Naive thymus-derived CD4-positive, alpha-beta T cell (primary cell): ENCODE measurements at regions of chr4 and their contacts with region 1.

Region 1: DNA sequence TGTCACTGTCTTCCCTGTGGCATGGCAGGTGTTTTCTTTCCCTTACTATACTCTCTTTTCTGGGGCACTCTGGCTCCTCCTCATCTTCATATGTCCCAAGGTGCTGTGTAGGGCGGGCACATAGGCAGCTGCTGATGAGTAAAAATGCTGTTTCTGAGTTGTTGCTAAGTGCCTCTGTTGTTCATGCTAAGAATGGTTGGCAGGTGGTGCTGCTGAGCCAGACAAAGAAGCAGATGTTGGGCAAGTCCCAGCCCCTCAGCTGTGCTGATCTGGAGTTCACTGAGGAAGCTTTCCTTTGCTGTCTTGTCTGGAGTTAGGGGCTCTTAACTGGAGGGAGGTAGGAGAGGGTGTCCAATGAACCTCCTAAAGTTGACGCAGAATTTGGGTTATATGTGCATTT is 40.6 kb downstream of the HADH start:
- DNase-seq: peak; percentile 30 to 85 (median 78)
- ATAC-seq: peak; percentile 91
- H3K4me3 ChIP-seq: no peak overlapping the region
- H3K4me3 Mint-ChIP-seq: peak overlapping the region; percentile 70 to 84 (median 76)
- H3K27ac ChIP-seq: peak overlapping the region; percentile 61
- H3K27ac Mint-ChIP-seq: peak overlapping the region; percentile 86 to 96 (median 94)
- H3K4me1 ChIP-seq: peaks cover 9 to 53% of the 10 kb centered on the region in 2 donors
- H3K4me1 Mint-ChIP-seq: peaks cover 28 to 77% (median 66%) of the 10 kb centered on the region in 7 donors
- H3K27me3 ChIP-seq: no peaks in the 10 kb centered on the region
- H3K27me3 Mint-ChIP-seq: no peaks in the 10 kb centered on the region

Region 2: DNA sequence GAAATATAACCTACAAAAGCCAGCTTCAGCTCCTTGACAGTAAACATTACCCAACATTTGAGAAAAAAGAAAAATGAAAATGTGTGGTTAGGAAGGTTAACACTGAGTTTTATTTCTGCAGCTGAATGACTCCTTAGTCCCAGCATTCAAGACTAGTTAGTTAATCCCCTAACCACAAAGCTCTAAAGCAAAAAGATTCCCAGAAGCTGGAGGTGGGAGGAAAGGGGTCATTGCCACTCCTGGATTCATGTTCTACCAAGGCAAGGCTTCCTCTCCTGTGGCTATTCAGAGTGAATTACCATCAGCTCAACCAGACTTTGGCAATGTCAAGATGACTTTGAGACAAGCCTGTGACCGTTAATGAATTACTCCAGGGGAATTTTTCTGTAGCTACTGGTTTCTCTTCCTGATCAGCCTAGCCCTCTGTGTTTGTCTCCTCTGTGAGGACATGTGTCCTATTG is 22.9 kb after region 1 on chr4:
- CTCF ChIA-PET with region 1: interaction called, 21 read pairs
- POLR2A ChIA-PET with region 1: interaction called, 9 read pairs
- intact Hi-C with region 1: loop called (anchors 1 to 2 kb)
- DNase-seq: no peak
- ATAC-seq: no peak
- H3K4me3 ChIP-seq: no peak overlapping the region
- H3K4me3 Mint-ChIP-seq: peak overlapping the region; percentile 36 to 84 (median 54)
- H3K27ac ChIP-seq: peak overlapping the region; percentile 66
- H3K27ac Mint-ChIP-seq: peak overlapping the region; percentile 82 to 99 (median 93)
- H3K4me1 ChIP-seq: peaks cover 15 to 82% of the 10 kb centered on the region in 2 donors
- H3K4me1 Mint-ChIP-seq: peaks cover 56 to 100% (median 94%) of the 10 kb centered on the region in 7 donors
- H3K27me3 ChIP-seq: no peaks in the 10 kb centered on the region
- H3K27me3 Mint-ChIP-seq: no peaks in the 10 kb centered on the region

Region 3: GRCh38 chr4:108109997-108110416 is 79.7 kb after region 1 on chr4:
- CTCF ChIA-PET with region 1: interaction called, 8 read pairs
- POLR2A ChIA-PET with region 1: interaction called, 7 read pairs
- intact Hi-C with region 1: loop called (anchors 1 kb)
- DNase-seq: no peak
- ATAC-seq: no peak
- H3K4me3 ChIP-seq: peak overlapping the region; percentile 7
- H3K4me3 Mint-ChIP-seq: peak overlapping the region; percentile 69 to 89 (median 78)
- H3K27ac ChIP-seq: peak overlapping the region; percentile 80
- H3K27ac Mint-ChIP-seq: peak overlapping the region; percentile 84 to 98 (median 90)
- H3K4me1 ChIP-seq: peaks cover 72 to 98% of the 10 kb centered on the region in 2 donors
- H3K4me1 Mint-ChIP-seq: peaks cover 70 to 97% (median 95%) of the 10 kb centered on the region in 7 donors
- H3K27me3 ChIP-seq: no peaks in the 10 kb centered on the region
- H3K27me3 Mint-ChIP-seq: no peaks in the 10 kb centered on the region

Region 4: DNA sequence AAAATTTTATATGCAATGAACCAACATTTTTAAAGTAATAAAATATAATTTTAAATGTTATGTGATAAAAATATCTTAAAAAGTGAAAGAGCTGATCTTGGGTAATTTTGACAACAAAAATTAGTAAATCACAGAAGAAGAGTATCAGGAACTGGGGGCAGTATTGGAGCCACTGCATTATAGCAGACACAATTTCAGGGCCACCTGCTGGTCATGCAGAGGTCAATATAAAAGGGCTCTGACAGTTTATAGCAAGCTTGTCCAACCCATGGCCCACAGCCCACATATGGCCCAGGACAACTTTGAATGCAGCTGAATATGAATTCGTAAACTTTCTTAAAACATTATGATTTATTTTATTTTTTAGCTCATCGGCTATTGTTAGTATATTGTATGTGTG is 151.4 kb after region 1 on chr4:
- CTCF ChIA-PET with region 1: interaction called, 11 read pairs
- POLR2A ChIA-PET with region 1: interaction called, 4 read pairs
- intact Hi-C with region 1: no loop called
- DNase-seq: no peak
- ATAC-seq: no peak
- H3K4me3 ChIP-seq: no peak overlapping the region
- H3K4me3 Mint-ChIP-seq: no peak overlapping the region
- H3K27ac ChIP-seq: no peak overlapping the region
- H3K27ac Mint-ChIP-seq: no peak overlapping the region
- H3K4me1 ChIP-seq: peaks cover 0 to 13% of the 10 kb centered on the region in 2 donors
- H3K4me1 Mint-ChIP-seq: peaks cover 3 to 56% (median 48%) of the 10 kb centered on the region in 7 donors
- H3K27me3 ChIP-seq: no peaks in the 10 kb centered on the region
- H3K27me3 Mint-ChIP-seq: peaks cover 0 to 9% (median 0%) of the 10 kb centered on the region in 5 donors

Region 5: GRCh38 chr4:108492816-108493595 is 462.7 kb after region 1 on chr4:
- CTCF ChIA-PET with region 1: interaction called, 8 read pairs
- POLR2A ChIA-PET with region 1: no interaction called
- intact Hi-C with region 1: loop called (anchors 1 kb)
- DNase-seq: no peak
- ATAC-seq: peak; percentile 27
- H3K4me3 ChIP-seq: no peak overlapping the region
- H3K4me3 Mint-ChIP-seq: no peak overlapping the region
- H3K27ac ChIP-seq: no peak overlapping the region
- H3K27ac Mint-ChIP-seq: no peak overlapping the region
- H3K4me1 ChIP-seq: no peaks in the 10 kb centered on the region
- H3K4me1 Mint-ChIP-seq: peaks cover 0 to 13% (median 3%) of the 10 kb centered on the region in 7 donors
- H3K27me3 ChIP-seq: no peaks in the 10 kb centered on the region
- H3K27me3 Mint-ChIP-seq: peaks cover 0 to 3% (median 0%) of the 10 kb centered on the region in 5 donors

Region 6: GRCh38 chr4:109302361-109303139 is 1272.2 kb after region 1 on chr4 and contains the start of gene COL25A1:
- CTCF ChIA-PET with region 1: no interaction called
- POLR2A ChIA-PET with region 1: no interaction called
- intact Hi-C with region 1: loop called in 1 of 2 experiments (anchors 10 kb)
- DNase-seq: peak; percentile 7 to 60 (median 41)
- ATAC-seq: peak; percentile 77
- H3K4me3 ChIP-seq: peak within 1 kb of the TSS; percentile 73
- H3K4me3 Mint-ChIP-seq: peak within 1 kb of the TSS; percentile 76 to 92 (median 84)
- H3K27ac ChIP-seq: no peak within 1 kb of the TSS
- H3K27ac Mint-ChIP-seq: peak within 1 kb of the TSS in 5 of 9 donors; percentile 21 to 65 (median 36)
- H3K4me1 ChIP-seq: peaks cover 8 to 9% of the 10 kb centered on the region in 2 donors
- H3K4me1 Mint-ChIP-seq: peaks cover 11 to 25% (median 19%) of the 10 kb centered on the region in 7 donors
- H3K27me3 ChIP-seq: peaks cover 10 to 16% of the 10 kb centered on the region in 2 donors
- H3K27me3 Mint-ChIP-seq: peaks cover 47 to 80% (median 64%) of the 10 kb centered on the region in 5 donors
- total RNA-seq, gene COL25A1: 0.22 to 0.59 (median 0.49) TPM in 4 of 5 experiments, not detected in the other